Heart right ventricle (tissue), 16 donors: ENCODE measurements at regions of chr9 and their contacts with region 1.

Region 1: DNA sequence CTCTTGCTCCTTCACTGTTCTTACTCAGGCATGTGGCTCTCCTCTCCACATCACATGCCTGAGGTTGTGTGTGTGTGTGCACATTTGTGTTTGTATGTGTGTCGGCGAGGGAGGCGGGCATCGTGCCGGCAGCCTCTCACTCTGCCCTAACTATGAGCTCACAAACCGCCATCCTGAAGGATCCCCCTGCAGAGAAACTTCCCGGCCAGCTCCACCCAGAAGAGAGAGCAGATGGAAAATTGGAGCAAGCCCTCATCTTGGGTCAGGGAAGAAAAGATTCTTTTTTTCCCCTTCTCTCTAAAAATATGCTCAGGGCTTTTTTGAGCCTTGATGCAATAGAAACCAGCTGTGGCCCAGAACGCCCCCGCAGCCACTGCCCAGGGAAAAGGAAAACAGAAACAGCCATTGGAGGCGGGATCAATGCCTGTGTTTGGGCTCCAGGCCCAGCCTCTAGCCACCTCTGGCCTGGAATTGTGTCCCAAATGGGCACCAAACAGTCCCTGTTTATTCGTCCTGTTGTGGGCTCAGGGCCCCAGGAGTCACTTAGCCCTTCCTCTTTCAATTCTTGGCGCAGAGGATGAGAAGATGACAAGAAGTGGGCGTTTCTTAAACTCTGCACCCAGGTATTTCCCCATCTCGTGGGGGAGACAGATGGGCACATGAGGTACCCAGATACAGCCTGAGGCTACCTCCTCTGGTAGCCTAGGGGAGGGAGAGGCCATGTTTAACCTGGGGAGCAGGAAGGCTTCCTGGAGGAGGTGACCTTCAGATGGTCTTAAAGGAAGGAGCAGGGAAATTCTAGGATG is 151.5 kb downstream of the RGS3 start:
- DNase-seq: peak in 1 of 2 donors; percentile 75
- ATAC-seq: peak; percentile 40 to 76 (median 64)
- H3K4me3 ChIP-seq: peak overlapping the region in 1 of 10 donors; percentile 15
- H3K27ac ChIP-seq: peak overlapping the region; percentile 5 to 98 (median 73)
- H3K4me1 ChIP-seq: peaks cover 15 to 93% (median 70%) of the 10 kb centered on the region in 9 donors
- H3K27me3 ChIP-seq: no peaks in the 10 kb centered on the region
- CTCF ChIP-seq: no peak

Region 2: DNA sequence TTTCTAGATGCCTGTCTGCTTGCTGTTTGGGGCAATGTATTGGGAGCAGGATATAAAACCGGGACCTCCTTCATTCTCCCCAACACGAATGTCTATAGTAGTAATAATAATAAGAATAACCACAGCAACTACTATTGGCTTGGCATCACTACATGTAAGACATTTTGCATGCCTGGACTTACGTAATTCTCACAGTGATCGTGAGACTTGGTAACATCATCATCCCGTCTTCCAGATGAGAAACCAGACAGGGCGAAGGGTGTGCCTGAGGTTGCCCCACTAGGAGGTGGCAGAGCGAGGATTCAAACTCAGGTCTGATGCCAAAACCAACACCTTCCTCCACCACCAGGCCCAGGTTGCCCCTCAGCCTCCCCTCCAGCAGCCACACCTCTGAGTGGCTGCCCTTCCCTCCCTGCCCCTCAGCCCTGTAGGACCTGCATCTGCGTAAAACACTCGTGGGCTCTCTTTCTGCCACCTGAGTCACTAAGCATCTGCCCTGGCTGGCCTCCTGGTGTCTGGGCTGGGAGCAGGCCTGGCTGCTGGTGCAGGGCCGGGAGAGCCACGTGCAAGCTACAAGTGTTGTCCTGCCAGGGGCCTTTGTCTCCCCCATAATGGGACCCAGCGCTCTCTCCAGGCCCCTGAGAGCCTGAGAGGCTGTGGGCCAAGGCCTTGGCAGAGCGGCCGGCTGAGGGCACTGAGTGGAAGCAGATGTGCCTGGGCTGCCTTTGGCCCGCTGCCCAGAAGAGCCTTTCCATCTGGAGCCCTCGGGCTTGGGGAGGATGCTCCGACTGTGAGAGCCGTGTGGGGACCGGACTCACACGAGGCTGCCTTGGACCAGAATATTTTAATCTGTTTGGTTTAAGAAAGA is 33.8 kb after region 1 on chr9:
- intact Hi-C with region 1: loop called in 3 of 10 experiments (anchors 2 to 5 kb)
- DNase-seq: peak; percentile 76 to 84
- ATAC-seq: peak; percentile 83 to 95 (median 88)
- H3K4me3 ChIP-seq: no peak overlapping the region
- H3K27ac ChIP-seq: peak overlapping the region in 8 of 10 donors; percentile 2 to 72 (median 65)
- H3K4me1 ChIP-seq: peaks cover 5 to 46% (median 21%) of the 10 kb centered on the region in 9 donors
- H3K27me3 ChIP-seq: no peaks in the 10 kb centered on the region
- CTCF ChIP-seq: peak in 2 of 9 donors; percentile 29 to 32